ENCODE measurements at regions of chr16 and their contacts with region 1.

Region 1: GRCh38 chr16:68040507-68041288 is 17.6 kb downstream of the DUS2 start:
- DNase-seq: peak; percentile 78 to 92 (median 81)
- H3K4me3 ChIP-seq: no peak overlapping the region
- H3K27ac ChIP-seq: no peak overlapping the region
- H3K4me1 ChIP-seq: no peaks in the 10 kb centered on the region
- H3K27me3 ChIP-seq: no peaks in the 10 kb centered on the region
- CTCF ChIP-seq: peak; percentile 75 to 90 (median 78)
- POLR2A ChIP-seq: no peak

Region 2: GRCh38 chr16:67993189-67994039 is 47.3 kb before region 1 on chr16:
- intact Hi-C with region 1: loop called in 1 of 2 experiments (anchors 10 kb)
- DNase-seq: peak; percentile 68 to 82 (median 75)
- H3K4me3 ChIP-seq: peak overlapping the region in 2 of 4 donors; percentile 22 to 30
- H3K27ac ChIP-seq: peak overlapping the region in 3 of 5 donors; percentile 56 to 64 (median 63)
- H3K4me1 ChIP-seq: peaks cover 3 to 10% of the 10 kb centered on the region in 2 donors
- H3K27me3 ChIP-seq: no peaks in the 10 kb centered on the region
- CTCF ChIP-seq: peak; percentile 86 to 99 (median 97)
- POLR2A ChIP-seq: no peak

Measured in adrenal gland (tissue), 19 donors.